Posterior vena cava (tissue), 2 donors: ENCODE measurements at regions of chr3 and their contacts with region 1.

Region 1: DNA sequence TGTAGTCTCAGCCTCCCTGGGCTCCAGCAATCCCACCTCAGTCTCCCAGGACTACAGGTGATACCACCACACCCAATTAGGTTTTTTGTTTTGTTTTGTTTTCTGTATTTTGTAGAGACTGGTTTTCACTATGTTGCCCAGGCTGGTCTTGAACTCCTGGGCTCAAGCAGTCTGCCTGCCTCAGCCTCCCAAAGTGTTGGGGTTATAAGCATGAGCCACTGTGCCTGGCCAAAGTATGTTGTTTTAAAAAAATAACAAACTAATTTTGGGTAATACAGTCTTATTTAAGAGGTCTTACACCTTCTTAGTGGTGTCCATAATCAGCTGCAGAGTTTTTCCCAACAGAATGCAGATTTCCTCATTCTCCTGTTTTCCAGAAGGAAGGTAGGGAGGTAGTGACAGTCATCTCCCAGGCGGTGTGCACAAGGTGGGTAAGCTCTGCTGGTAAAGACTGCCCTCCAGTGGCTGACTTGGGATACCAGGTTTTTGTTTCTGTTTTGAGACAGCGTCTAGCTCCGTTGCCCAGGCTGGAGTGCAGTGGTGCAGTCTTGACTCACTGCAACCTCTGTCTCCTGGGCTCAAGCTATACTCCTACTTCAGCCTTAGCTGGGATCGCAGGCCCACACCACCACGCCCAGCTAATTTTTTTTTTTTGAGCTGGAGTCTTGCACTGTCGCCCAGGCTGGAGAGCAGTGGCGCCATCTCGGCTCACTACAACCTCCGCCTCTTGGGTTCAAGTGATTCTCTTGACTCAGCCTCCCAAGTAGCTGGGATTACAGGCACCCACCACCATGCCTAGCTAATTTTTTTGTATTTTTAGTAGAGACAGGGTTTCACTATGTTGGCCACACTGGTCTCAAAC is 58.4 kb downstream of the MAP6D1 start:
- DNase-seq: no peak

Region 2: DNA sequence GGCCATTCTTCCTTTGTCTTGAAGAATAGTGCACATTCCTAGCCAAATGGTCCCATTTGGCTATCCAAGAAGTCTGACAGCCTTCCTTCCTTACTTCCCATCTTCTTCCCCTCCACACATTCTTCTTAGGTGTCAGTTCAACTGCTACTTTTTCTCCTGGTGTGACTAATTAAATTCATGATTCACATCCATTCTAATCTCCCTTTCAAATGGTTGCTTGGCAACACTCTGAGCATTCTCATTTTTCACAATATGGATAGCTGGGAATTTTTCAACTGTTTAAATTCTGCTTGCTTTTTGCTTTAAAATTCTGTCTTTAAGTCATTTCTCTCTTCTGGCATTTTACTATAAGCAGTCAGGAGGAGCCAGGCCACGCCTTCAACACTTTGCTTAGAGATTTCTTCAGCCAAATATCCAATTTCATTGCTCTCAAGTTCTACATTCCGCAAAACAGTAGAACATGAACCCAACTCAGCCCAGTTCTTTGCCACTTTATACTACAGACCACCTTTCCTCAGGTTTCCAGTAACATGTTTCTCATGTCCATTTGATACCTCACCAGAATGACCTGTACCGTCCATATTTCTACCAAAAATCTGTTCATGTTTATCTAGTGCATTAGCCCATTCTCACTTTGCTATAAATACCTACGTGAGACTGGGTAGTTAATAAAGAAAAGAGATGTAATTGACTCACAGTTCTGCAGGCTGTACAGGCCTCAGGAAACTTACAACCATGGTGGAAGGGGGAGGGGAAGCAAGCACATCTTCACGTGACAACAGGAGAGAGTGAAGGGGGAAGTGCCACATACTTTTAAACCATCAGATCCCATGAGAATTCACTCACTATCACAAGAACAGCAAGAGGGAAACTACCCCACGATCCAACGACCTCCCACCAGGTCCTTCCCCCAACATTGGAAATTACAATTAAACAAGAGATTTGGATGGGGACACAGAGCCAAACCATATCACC is 306.6 kb before region 1 on chr3:
- intact Hi-C with region 1: loop called in 1 of 2 experiments (anchors 10 kb)
- DNase-seq: no peak

Region 3: DNA sequence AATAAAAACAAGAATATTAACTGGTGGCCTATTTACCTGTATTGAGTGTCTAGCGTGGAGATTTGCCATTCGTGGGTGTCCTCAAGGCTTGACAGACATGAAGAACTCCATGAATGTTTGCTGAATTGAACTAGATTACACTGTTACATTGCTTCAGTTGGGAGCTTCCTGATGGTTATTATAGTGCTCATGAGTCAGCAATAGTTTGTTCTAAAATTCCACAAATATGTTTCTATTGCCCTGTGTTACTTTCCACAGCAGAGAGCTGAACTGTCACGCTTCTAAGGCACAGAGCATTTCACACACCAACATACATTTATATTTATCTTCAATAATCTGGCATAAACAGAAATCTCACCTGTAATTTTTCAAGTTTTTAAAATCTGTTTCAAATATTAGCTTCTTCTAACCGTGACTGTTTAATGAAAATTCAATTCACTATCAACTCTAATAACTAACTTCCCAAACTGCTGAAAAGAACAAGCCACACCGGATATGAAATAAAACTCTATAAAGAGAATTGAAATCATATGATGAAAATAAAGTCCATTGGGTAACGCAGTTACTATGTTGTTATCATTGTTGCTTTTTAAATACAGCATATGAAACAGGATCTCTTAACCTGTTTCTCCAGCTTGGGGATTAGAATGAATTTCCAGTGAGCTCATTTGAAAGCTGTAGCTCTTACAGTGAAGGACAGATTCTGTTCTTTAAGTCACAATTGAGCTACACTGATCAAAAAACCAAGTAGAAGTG is 277.3 kb before region 1 on chr3:
- intact Hi-C with region 1: loop called in 1 of 2 experiments (anchors 10 kb)
- DNase-seq: no peak

Region 4: GRCh38 chr3:183991403-183991802 is 224.4 kb after region 1 on chr3:
- intact Hi-C with region 1: no loop called
- DNase-seq: no peak

Region 5: DNA sequence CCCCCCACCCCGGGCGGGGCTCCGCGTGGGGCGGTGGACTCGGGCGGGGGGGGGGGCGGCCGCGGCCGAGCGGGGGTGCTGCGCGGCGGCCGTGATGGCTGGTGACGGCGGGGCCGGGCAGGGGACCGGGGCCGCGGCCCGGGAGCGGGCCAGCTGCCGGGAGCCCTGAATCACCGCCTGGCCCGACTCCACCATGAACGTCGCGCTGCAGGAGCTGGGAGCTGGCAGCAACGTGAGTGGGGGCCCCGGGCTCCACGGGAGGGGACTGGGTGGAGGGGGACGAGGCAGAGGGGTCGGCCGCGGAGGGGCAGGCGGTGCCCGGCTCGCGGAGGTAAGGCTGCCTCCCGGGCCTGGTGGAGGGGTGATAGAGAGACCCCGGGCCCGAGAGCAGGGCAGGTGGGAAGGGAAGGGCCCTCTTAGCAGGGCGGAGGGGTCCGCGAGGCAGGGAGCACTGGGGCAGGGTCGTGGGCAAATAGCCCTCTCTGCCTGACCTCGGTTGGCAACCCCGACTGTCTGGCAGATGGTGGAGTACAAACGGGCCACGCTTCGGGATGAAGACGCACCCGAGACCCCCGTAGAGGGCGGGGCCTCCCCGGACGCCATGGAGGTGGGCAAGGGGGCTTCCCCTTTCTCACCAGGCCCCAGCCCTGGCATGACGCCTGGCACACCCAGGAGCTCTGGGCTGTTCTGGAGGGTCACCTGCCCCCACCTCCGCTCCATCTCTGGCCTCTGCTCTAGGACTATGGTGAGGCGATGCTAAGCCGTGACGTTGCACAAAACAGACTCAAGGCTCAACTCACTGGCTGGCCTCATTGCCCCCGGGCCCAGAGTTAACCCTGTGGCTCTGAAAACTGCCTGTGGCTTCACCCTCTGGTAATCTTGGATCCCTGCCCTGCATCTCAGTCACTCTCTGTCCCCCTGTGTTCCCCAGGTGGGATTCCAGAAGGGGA is 509.3 kb after region 1 on chr3 and contains the start of gene ECE2:
- intact Hi-C with region 1: no loop called
- DNase-seq: no peak
- total RNA-seq, gene ECE2: not detected